Right ventricle myocardium inferior (tissue), 1 donor: ENCODE measurements at regions of chr16 and their contacts with region 1.

Region 1: DNA sequence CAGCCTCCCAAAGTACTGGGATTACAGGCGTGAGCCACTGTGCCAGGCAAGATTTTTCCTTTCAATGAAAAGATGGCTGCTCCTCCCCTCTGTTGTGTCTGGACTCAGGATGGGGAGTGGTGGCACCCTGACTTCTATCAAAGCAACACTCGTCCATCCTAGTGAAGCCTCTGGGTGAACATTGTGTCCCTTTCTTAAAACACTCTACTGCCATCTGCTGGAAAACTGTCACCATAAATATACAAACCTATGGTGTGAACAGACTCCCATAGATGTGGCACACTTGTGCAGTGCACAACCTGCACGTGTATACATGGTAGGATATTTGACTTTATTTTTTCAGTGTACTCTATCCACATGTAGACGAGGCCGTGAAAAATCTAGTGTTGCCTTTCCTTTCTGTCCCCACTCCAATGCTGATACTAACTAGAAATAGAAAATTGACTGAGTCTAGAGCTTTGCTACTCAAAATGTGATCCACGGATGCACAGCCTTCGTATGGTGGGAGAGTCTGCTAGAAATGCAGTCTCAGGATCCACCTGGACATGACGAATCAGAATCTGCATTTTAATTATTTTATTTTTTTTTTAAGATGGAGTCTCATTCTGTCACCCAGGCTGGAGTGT is 55.9 kb upstream of the PLCG2 start:
- DNase-seq: no peak
- ATAC-seq: peak; percentile 88

Region 2: GRCh38 chr16:80631581-80631980 is 1091.6 kb before region 1 on chr16:
- intact Hi-C with region 1: no loop called
- DNase-seq: no peak
- ATAC-seq: no peak

Region 3: GRCh38 chr16:81366316-81366932 is 356.8 kb before region 1 on chr16:
- intact Hi-C with region 1: loop called (anchors 2 kb)
- DNase-seq: no peak
- ATAC-seq: no peak

Region 4: GRCh38 chr16:81403616-81404373 is 319.4 kb before region 1 on chr16:
- intact Hi-C with region 1: loop called (anchors 1 kb)
- DNase-seq: peak; percentile 95
- ATAC-seq: peak; percentile 86

Region 5: DNA sequence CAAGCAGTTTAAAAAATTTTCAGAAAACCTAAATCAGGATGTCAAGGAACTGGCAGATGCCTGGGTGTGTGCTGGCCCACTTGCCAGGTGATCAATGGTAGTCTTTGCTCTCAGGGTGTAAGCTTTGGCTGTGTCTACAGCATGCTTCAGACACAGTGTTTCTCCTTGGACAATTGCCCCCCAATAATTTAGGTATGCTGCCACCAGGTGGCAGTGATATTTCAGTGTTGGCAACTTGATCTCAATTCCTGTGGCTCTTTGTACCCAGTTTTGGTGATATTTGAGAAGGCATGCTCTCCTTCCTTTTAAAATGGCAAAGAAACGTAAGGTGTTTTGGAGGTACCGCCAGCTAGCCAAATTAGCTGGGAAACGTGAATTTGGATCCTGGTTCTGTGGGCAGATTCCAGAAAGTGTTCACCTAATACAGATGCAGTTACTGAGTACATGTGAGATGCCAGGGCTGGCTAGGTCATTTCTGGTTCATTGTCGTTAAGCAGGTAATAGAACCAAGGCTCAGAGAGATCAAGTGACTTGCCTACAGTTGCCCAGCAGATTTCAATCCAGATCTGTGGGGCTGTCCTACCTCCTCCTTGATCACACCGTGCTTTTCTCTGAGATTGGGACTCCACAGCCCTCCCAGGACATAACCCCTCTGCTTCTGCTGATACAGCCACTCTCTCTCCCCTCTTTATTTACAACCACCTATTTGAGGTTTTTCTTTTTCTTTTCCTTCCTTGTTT is 99.7 kb before region 1 on chr16:
- intact Hi-C with region 1: loop called (anchors 1 kb)
- DNase-seq: no peak
- ATAC-seq: no peak